Activated CD8-positive, alpha-beta T cell treated with anti-CD3 and anti-CD28 coated beads for 36 hours (primary cell): ENCODE measurements at regions of chr2 and their contacts with region 1.

Region 1: GRCh38 chr2:186485871-186486650 is at the start of gene ZC3H15:
- DNase-seq: peak; percentile 96
- ATAC-seq: peak; percentile 94
- H3K4me3 Mint-ChIP-seq: peak within 1 kb of the TSS; percentile 97
- H3K27ac Mint-ChIP-seq: peak within 1 kb of the TSS; percentile 98
- H3K4me1 Mint-ChIP-seq: peaks cover 59% of the 10 kb centered on the region
- H3K27me3 Mint-ChIP-seq: no peaks in the 10 kb centered on the region
- CTCF ChIP-seq: no peak
- total RNA-seq, gene ZC3H15: 101 to 106 TPM

Region 2: GRCh38 chr2:186195696-186196095 is 290.4 kb before region 1 on chr2:
- CTCF ChIA-PET with region 1: no interaction called
- POLR2A ChIA-PET with region 1: no interaction called
- intact Hi-C with region 1: no loop called
- DNase-seq: no peak
- ATAC-seq: no peak
- H3K4me3 Mint-ChIP-seq: no peak overlapping the region
- H3K27ac Mint-ChIP-seq: no peak overlapping the region
- H3K4me1 Mint-ChIP-seq: no peaks in the 10 kb centered on the region
- H3K27me3 Mint-ChIP-seq: no peaks in the 10 kb centered on the region
- CTCF ChIP-seq: no peak

Region 3: GRCh38 chr2:186503848-186504606 is 18.0 kb after region 1 on chr2:
- CTCF ChIA-PET with region 1: interaction called, 12 read pairs
- POLR2A ChIA-PET with region 1: interaction called, 5 read pairs
- intact Hi-C with region 1: no loop called
- DNase-seq: no peak
- ATAC-seq: peak; percentile 39
- H3K4me3 Mint-ChIP-seq: no peak overlapping the region
- H3K27ac Mint-ChIP-seq: peak overlapping the region; percentile 65
- H3K4me1 Mint-ChIP-seq: peaks cover 24% of the 10 kb centered on the region
- H3K27me3 Mint-ChIP-seq: no peaks in the 10 kb centered on the region
- CTCF ChIP-seq: peak; percentile 71